Activated T-helper 2 cell treated with anti-CD3 and anti-CD28 coated beads, Interferon-gamma antibody, Interleukin-2, Interleukin-4, amounts not matched to agents 10 μg/mL and 5 μg/mL and 100 μg/mL, durations not matched to agents 14 hours and 24 hours and 36 hours (primary cell): ENCODE measurements at regions of chr19 and their contacts with region 1.

Region 1: DNA sequence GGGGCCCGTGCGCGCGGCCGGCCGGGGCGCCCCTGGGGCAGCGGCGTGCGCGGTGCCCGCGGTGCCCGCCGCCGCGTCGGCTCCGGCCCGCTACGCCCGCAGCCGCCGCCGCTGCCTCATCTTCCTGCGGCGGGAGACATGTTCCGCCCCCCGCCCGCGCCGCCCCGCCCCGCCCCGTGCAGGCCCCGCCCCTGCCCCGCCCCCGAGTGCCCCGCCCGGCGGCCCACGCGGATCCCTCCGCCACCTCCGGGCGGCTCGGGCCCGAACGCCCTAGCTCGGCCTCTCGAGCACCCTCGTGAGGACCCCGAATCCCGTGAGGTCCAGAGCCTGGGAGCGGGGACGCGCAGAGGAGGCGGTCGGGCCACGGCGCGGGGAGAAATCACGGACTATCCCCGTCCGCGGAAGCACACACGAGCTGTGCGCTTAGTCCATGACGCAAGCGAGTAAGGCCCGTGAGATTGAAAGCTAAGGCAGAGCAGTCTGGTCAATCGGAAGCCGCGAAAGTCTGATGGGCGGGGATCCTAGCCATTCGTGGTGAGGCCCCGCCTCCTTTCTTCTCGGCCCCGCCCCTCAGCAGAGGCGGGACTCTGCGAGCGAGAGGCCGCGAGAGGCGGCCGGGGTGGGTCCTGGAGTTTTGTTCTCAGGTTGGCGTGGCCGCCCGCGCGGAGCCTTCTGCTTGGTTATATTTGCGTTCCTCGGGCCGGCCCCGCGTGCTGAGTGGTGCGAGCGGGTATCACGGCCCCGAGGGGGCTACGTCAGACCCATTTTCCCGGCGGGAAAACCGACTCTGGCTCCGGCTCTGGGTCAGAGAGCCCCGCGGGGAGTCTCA is at the start of gene TCF3:
- DNase-seq: peak; percentile 99
- H3K4me3 Mint-ChIP-seq: peak within 1 kb of the TSS; percentile 91
- H3K27ac Mint-ChIP-seq: peak within 1 kb of the TSS; percentile 89
- H3K4me1 Mint-ChIP-seq: peaks cover 16% of the 10 kb centered on the region
- H3K27me3 Mint-ChIP-seq: no peaks in the 10 kb centered on the region
- total RNA-seq, gene TCF3: 153 and 173 TPM in 2 replicates

Region 2: GRCh38 chr19:1592755-1593500 is 59.8 kb before region 1 on chr19 and contains the start of gene MBD3:
- intact Hi-C with region 1: loop called (anchors 5 kb)
- DNase-seq: peak; percentile 84
- H3K4me3 Mint-ChIP-seq: peak within 1 kb of the TSS; percentile 88
- H3K27ac Mint-ChIP-seq: peak within 1 kb of the TSS; percentile 84
- H3K4me1 Mint-ChIP-seq: peaks cover 16% of the 10 kb centered on the region
- H3K27me3 Mint-ChIP-seq: no peaks in the 10 kb centered on the region
- total RNA-seq, gene MBD3: 123 and 125 TPM in 2 replicates

Region 3: GRCh38 chr19:1700002-1700732 is 47.5 kb after region 1 on chr19:
- intact Hi-C with region 1: no loop called
- DNase-seq: no peak
- H3K4me3 Mint-ChIP-seq: no peak overlapping the region
- H3K27ac Mint-ChIP-seq: no peak overlapping the region
- H3K4me1 Mint-ChIP-seq: peaks cover 4% of the 10 kb centered on the region
- H3K27me3 Mint-ChIP-seq: peaks cover 17% of the 10 kb centered on the region